Activated CD4-positive, alpha-beta T cell treated with anti-CD3 and anti-CD28 coated beads for 36 hours (primary cell): ENCODE measurements at regions of chr1 and their contacts with region 1.

Region 1: GRCh38 chr1:18100491-18101063 is 7.0 kb upstream of the IGSF21 start:
- DNase-seq: peak; percentile 68
- ATAC-seq: no peak
- H3K4me3 Mint-ChIP-seq: no peak overlapping the region
- H3K27ac Mint-ChIP-seq: no peak overlapping the region
- H3K4me1 Mint-ChIP-seq: no peaks in the 10 kb centered on the region
- H3K27me3 Mint-ChIP-seq: peaks cover 25% of the 10 kb centered on the region

Region 2: GRCh38 chr1:17494114-17494729 is 606.4 kb before region 1 on chr1:
- CTCF ChIA-PET with region 1: no interaction called
- POLR2A ChIA-PET with region 1: no interaction called
- intact Hi-C with region 1: loop called in 1 of 2 experiments (anchors 5 kb)
- DNase-seq: peak; percentile 84
- ATAC-seq: peak; percentile 100
- H3K4me3 Mint-ChIP-seq: no peak overlapping the region
- H3K27ac Mint-ChIP-seq: no peak overlapping the region
- H3K4me1 Mint-ChIP-seq: no peaks in the 10 kb centered on the region
- H3K27me3 Mint-ChIP-seq: peaks cover 4% of the 10 kb centered on the region

Region 3: DNA sequence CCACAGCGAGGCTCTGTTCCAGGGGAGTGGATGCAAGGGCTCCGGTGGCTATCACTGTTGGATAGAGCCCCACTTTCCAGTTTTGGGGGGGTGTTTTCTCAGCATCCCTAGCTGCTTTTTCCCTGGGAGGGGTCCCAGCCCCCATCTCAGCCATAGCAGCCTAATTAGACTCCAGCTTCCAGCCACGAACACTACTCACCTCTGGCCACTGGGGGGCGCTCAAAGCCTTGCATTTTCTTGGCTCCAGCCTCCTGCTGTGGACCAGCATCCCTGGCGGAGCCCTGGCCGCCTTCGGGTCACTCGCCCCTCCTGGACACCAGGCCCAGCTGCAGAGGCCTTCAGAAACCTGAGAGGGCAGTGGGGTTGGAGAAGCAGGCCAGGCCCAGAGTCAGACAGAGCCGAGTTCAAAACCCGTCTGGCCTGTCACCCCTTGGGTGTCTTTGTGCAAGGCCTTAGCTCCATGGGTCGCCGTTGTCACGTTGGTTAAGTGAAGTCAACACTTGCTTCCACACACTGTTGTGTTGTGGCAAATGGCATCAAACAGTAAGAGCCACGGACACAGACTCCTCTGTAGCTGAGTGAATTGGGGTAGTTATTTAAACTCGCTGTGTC is 438.9 kb before region 1 on chr1:
- CTCF ChIA-PET with region 1: interaction called, 7 read pairs
- POLR2A ChIA-PET with region 1: no interaction called
- intact Hi-C with region 1: loop called (anchors 1 to 5 kb)
- DNase-seq: peak; percentile 82
- ATAC-seq: no peak
- H3K4me3 Mint-ChIP-seq: no peak overlapping the region
- H3K27ac Mint-ChIP-seq: no peak overlapping the region
- H3K4me1 Mint-ChIP-seq: no peaks in the 10 kb centered on the region
- H3K27me3 Mint-ChIP-seq: no peaks in the 10 kb centered on the region

Region 4: DNA sequence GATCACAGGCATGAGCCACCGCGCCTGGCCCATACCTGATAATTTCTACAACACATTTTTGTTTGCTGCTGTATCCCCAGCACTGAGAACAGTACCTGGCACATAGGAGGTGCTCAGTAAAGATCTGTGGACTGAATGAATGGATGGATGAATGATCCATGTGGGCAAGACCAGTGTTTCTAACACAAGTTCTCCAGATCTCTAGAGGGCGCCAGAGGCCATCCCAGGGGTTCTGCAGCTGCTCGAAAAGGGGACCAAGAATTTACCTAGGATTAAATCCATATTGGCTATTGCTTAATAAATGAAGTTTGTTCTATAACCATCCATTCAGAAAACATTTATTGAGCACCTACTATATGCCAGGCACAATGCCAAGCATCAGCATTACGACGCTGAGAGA is 177.7 kb before region 1 on chr1:
- CTCF ChIA-PET with region 1: interaction called, 7 read pairs
- POLR2A ChIA-PET with region 1: no interaction called
- intact Hi-C with region 1: loop called (anchors 1 to 5 kb)
- DNase-seq: peak; percentile 53
- ATAC-seq: no peak
- H3K4me3 Mint-ChIP-seq: no peak overlapping the region
- H3K27ac Mint-ChIP-seq: no peak overlapping the region
- H3K4me1 Mint-ChIP-seq: no peaks in the 10 kb centered on the region
- H3K27me3 Mint-ChIP-seq: peaks cover 28% of the 10 kb centered on the region

Region 5: DNA sequence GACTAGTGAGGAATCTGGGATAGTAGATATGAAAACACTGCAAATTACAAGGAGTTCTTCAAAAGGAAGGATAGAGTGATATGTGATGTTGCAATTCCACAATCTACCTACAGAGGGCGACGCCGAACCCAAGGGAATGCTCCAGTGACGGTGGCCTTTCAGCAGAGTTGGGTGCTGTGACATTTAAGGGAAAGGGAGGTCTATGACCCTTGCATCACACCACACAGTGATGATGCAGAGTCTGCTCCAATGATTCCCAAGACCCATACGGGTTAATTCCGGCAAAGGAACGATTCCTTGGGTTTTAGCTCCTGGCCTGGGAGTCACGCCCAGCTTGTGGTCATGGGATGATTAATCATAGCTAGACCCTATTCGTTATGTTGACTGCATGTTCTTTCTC is 116.0 kb before region 1 on chr1:
- CTCF ChIA-PET with region 1: interaction called, 3 read pairs
- POLR2A ChIA-PET with region 1: no interaction called
- intact Hi-C with region 1: loop called (anchors 1 to 5 kb)
- DNase-seq: peak; percentile 55
- ATAC-seq: no peak
- H3K4me3 Mint-ChIP-seq: no peak overlapping the region
- H3K27ac Mint-ChIP-seq: no peak overlapping the region
- H3K4me1 Mint-ChIP-seq: no peaks in the 10 kb centered on the region
- H3K27me3 Mint-ChIP-seq: peaks cover 2% of the 10 kb centered on the region

Region 6: DNA sequence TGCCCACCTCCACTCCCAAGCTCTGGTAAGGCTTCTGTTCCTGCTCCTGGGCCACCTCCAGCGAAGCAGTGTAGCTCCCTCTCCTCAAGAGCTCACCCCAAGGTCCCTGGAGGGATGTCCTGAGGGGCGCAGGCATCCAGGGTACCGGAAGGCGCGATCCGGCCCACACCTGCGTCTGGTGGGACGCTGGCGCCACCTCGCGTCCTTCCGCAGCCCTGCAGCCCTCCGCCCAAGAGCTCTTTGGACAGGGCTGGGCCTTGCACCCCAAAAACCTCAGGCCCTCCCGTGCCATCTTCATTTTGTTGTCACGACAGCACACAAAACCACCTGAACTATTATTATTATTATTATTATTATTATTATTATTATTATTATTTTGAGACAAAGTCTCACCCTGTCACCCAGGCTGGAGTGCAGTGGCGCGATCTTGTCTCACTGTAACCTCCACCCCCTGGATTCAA is 480.9 kb after region 1 on chr1:
- CTCF ChIA-PET with region 1: interaction called, 3 read pairs
- POLR2A ChIA-PET with region 1: no interaction called
- intact Hi-C with region 1: loop called in 1 of 2 experiments (anchors 10 kb)
- DNase-seq: peak; percentile 73
- ATAC-seq: peak; percentile 51
- H3K4me3 Mint-ChIP-seq: no peak overlapping the region
- H3K27ac Mint-ChIP-seq: no peak overlapping the region
- H3K4me1 Mint-ChIP-seq: no peaks in the 10 kb centered on the region
- H3K27me3 Mint-ChIP-seq: peaks cover 11% of the 10 kb centered on the region

Region 7: GRCh38 chr1:18635891-18636595 is 535.5 kb after region 1 on chr1:
- CTCF ChIA-PET with region 1: no interaction called
- POLR2A ChIA-PET with region 1: no interaction called
- intact Hi-C with region 1: loop called (anchors 5 to 10 kb)
- DNase-seq: peak; percentile 50
- ATAC-seq: no peak
- H3K4me3 Mint-ChIP-seq: peak overlapping the region; percentile 4
- H3K27ac Mint-ChIP-seq: no peak overlapping the region
- H3K4me1 Mint-ChIP-seq: peaks cover 22% of the 10 kb centered on the region
- H3K27me3 Mint-ChIP-seq: peaks cover 86% of the 10 kb centered on the region